ENCODE measurements at regions of chr6 and their contacts with region 1.

Region 1: GRCh38 chr6:54775576-54775975 is 71.0 kb upstream of the FAM83B start:
- DNase-seq: no peak
- H3K4me3 ChIP-seq: no peak overlapping the region
- H3K27ac ChIP-seq: no peak overlapping the region
- H3K27me3 ChIP-seq: no peaks in the 10 kb centered on the region
- CTCF ChIP-seq: no peak

Region 2: GRCh38 chr6:54846243-54846856 is 70.8 kb after region 1 on chr6 and contains the start of gene FAM83B:
- CTCF ChIA-PET with region 1: interaction called, 11 read pairs
- POLR2A ChIA-PET with region 1: no interaction called
- DNase-seq: no peak
- H3K4me3 ChIP-seq: peak within 1 kb of the TSS; percentile 70
- H3K27ac ChIP-seq: no peak within 1 kb of the TSS
- H3K27me3 ChIP-seq: peaks cover 3% of the 10 kb centered on the region
- CTCF ChIP-seq: no peak
- polyA plus RNA-seq, gene FAM83B: 0.05 and 0.09 TPM in 2 replicates

Measured in AG04450 (cell line).